Ovary (tissue), 10 donors: ENCODE measurements at regions of chr9 and their contacts with region 1.

Region 1: GRCh38 chr9:113657703-113658544 is 194.4 kb downstream of the RGS3 start:
- DNase-seq: peak; percentile 75 to 89 (median 88)
- H3K4me3 ChIP-seq: no peak overlapping the region
- H3K27ac ChIP-seq: no peak overlapping the region
- H3K4me1 ChIP-seq: peaks cover 7% of the 10 kb centered on the region
- H3K27me3 ChIP-seq: no peaks in the 10 kb centered on the region
- CTCF ChIP-seq: peak; percentile 69 to 94 (median 92)
- EP300 ChIP-seq: no peak
- POLR2A ChIP-seq: no peak

Region 2: DNA sequence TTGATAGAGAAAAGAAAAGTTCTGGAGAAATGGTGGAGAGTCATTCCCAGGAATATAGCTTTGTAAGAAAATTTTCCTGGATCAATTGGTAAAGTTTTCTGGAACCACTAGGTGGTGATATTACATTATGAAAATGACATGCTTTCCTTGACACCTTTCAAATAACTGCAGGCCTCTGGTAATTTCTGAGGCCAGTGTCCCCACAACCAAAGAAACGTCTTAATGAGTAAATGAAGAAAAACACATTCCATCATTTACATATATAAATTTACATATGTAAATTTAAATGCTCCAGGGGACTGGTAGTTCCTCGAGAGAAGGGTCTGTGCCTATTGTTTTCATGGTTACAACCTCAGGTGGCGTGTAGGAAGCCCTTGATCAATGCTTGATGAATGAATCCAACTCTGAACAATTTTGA is 211.6 kb before region 1 on chr9:
- intact Hi-C with region 1: loop called (anchors 2 to 5 kb)
- DNase-seq: no peak
- H3K4me3 ChIP-seq: no peak overlapping the region
- H3K27ac ChIP-seq: no peak overlapping the region
- H3K4me1 ChIP-seq: no peaks in the 10 kb centered on the region
- H3K27me3 ChIP-seq: no peaks in the 10 kb centered on the region
- CTCF ChIP-seq: peak; percentile 47 to 78 (median 63)
- EP300 ChIP-seq: no peak
- POLR2A ChIP-seq: no peak